Calu3 (cell line): ENCODE measurements at regions of chr12 and their contacts with region 1.

Region 1: GRCh38 chr12:94762259-94762942 is 112.0 kb upstream of the TMCC3 start:
- DNase-seq: no peak
- H3K4me3 Mint-ChIP-seq: no peak overlapping the region
- H3K27ac Mint-ChIP-seq: peak overlapping the region; percentile 66
- H3K4me1 Mint-ChIP-seq: peaks cover 22% of the 10 kb centered on the region
- H3K27me3 Mint-ChIP-seq: no peaks in the 10 kb centered on the region
- CTCF ChIP-seq: no peak

Region 2: GRCh38 chr12:94149119-94149780 is 613.2 kb before region 1 on chr12:
- CTCF ChIA-PET with region 1: no interaction called
- intact Hi-C with region 1: loop called (anchors 10 kb)
- DNase-seq: peak; percentile 50
- H3K4me3 Mint-ChIP-seq: peak overlapping the region; percentile 70
- H3K27ac Mint-ChIP-seq: no peak overlapping the region
- H3K4me1 Mint-ChIP-seq: peaks cover 17% of the 10 kb centered on the region
- H3K27me3 Mint-ChIP-seq: peaks cover 89% of the 10 kb centered on the region
- CTCF ChIP-seq: peak; percentile 36

Region 3: GRCh38 chr12:94545935-94546771 is 216.2 kb before region 1 on chr12:
- CTCF ChIA-PET with region 1: interaction called, 5 read pairs
- intact Hi-C with region 1: loop called (anchors 1 kb)
- DNase-seq: peak; percentile 64
- H3K4me3 Mint-ChIP-seq: no peak overlapping the region
- H3K27ac Mint-ChIP-seq: no peak overlapping the region
- H3K4me1 Mint-ChIP-seq: peaks cover 8% of the 10 kb centered on the region
- H3K27me3 Mint-ChIP-seq: no peaks in the 10 kb centered on the region
- CTCF ChIP-seq: peak; percentile 55

Region 4: GRCh38 chr12:94603434-94604365 is 158.7 kb before region 1 on chr12:
- CTCF ChIA-PET with region 1: no interaction called
- intact Hi-C with region 1: loop called (anchors 1 kb)
- DNase-seq: peak; percentile 83
- H3K4me3 Mint-ChIP-seq: no peak overlapping the region
- H3K27ac Mint-ChIP-seq: no peak overlapping the region
- H3K4me1 Mint-ChIP-seq: no peaks in the 10 kb centered on the region
- H3K27me3 Mint-ChIP-seq: peaks cover 10% of the 10 kb centered on the region
- CTCF ChIP-seq: peak; percentile 89

Region 5: DNA sequence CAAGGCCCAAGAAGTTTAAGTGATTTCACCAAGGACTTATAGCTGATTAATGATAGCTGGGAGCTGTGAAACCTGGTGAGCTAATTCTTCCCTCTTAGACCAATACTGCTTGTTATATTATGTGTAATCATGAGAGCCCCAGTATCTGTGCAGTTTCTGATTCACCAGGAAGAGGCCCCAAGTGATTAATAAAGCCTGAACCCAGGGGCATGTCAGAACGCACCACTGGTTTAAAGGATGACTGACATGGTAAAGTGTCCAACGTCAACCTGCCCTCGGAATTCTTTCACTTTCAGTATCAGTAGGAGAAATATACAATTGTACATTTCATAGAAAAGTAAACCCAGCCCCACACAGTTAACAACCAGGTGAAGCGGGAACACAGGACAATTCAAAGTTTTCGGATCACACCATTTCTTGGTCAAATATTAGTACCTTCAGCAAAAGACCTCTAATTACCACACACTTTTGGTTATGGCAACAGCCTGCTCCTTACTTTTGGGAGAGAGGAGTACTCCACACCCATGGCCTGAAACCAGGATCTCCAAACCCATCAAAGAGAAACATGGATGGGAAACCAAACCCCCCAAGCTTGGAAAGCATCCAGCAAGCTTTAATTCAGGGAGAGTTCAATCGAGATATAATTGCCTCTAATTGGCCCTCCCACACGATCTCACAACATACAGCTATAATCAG is 140.6 kb before region 1 on chr12:
- CTCF ChIA-PET with region 1: no interaction called
- intact Hi-C with region 1: loop called (anchors 5 kb)
- DNase-seq: peak; percentile 26
- H3K4me3 Mint-ChIP-seq: peak overlapping the region; percentile 70
- H3K27ac Mint-ChIP-seq: peak overlapping the region; percentile 78
- H3K4me1 Mint-ChIP-seq: peaks cover 25% of the 10 kb centered on the region
- H3K27me3 Mint-ChIP-seq: no peaks in the 10 kb centered on the region
- CTCF ChIP-seq: no peak

Region 6: DNA sequence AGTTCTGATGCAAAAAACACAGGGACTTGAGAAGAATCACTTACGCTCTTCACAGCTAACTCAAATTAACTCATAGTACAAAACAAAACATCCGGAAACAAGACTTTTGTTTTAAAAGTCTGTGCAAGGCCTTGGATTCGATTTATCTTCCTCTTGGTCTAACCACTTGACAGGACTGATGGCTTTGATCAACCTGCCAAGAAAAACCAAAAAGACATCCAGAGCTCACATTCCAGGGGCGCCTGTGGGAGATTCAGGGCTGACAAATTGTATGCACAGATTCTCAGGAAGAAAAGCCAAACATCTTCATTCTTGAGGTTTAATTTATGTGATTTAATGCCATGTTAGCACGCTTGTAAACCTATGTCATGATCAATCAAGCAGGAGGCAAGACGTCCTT is 17.1 kb after region 1 on chr12:
- CTCF ChIA-PET with region 1: no interaction called
- intact Hi-C with region 1: no loop called
- DNase-seq: no peak
- H3K4me3 Mint-ChIP-seq: no peak overlapping the region
- H3K27ac Mint-ChIP-seq: no peak overlapping the region
- H3K4me1 Mint-ChIP-seq: no peaks in the 10 kb centered on the region
- H3K27me3 Mint-ChIP-seq: peaks cover 43% of the 10 kb centered on the region
- CTCF ChIP-seq: no peak

Region 7: GRCh38 chr12:94875525-94875924 is 113.1 kb after region 1 on chr12:
- CTCF ChIA-PET with region 1: interaction called, 6 read pairs
- intact Hi-C with region 1: loop called (anchors 10 kb)
- DNase-seq: peak; percentile 55
- H3K4me3 Mint-ChIP-seq: no peak overlapping the region
- H3K27ac Mint-ChIP-seq: no peak overlapping the region
- H3K4me1 Mint-ChIP-seq: peaks cover 10% of the 10 kb centered on the region
- H3K27me3 Mint-ChIP-seq: peaks cover 53% of the 10 kb centered on the region
- CTCF ChIP-seq: no peak